PC-3 (cell line): ENCODE measurements at regions of chr5 and their contacts with region 1.

Region 1: DNA sequence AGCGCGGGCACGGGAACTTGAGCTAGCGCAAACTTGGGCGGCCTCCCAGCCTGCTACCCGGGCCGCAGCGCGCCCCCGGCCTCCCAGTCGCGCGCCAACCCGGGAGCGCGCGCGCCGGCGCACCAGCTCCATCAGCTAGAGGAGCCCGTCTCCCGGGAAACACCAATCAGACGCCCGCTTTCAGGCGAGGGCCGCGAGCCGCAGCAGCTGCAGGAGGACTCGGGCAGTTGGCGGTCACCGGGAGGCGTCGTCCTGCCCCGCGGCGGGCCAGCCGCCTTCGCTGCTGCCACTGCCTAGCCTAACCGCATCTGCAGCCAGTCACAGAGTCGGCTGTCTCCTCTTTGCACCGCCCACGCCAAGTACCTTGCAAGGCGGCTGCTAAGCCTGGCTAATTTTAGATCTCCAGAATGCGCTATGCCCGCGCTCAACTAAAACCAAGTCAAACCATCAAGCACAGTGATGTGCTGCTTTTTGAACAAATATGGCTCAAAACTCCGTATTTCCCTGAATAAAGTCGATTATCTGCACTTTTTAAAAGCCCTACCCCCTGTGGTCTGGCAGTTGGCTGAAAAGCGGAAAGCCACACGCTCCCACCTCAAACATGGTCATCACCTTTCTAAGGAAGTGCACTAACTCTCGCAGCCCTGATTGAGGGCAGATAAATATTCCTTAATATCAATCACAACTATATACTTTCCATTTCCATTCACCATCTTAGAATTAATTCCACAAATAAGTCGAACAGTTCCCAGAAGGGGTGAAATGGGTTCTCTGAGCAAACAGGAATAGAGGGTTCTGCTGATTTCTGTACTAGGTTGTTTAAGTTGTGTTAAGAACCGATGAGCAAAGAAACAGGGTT is 221.8 kb downstream of the MEF2C start:
- DNase-seq: peak; percentile 96
- ATAC-seq: peak; percentile 94
- H3K4me3 ChIP-seq: peak overlapping the region; percentile 73
- H3K27ac ChIP-seq: peak overlapping the region; percentile 71
- H3K4me1 ChIP-seq: peaks cover 8% of the 10 kb centered on the region; the same call in 1 of the 2 replicates
- H3K27me3 ChIP-seq: no peaks in the 10 kb centered on the region
- CTCF ChIP-seq: no peak

Region 2: DNA sequence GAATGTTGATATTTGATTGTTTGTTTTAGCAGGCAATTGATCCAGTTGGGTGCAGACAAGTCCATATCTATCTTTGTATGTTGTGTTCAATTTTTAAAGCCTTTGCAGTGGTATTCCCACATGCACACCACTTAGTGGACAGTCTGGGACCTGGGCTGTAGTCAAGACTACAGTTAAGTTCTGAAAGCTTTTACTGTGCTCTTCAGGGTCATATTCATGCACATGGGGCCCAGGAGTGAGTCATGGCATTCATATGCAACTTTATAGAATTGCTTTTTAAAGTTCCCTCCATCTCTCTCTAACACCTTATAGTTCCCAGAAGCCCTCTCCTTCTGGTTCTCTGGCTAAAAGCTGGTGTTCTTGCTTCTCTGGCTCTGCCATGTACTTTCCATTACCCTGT is 1020.3 kb before region 1 on chr5:
- CTCF ChIA-PET with region 1: no interaction called
- POLR2A ChIA-PET with region 1: interaction called, 15 read pairs
- intact Hi-C with region 1: no loop called
- DNase-seq: no peak
- ATAC-seq: peak; percentile 43; the same call in 1 of the 2 replicates
- H3K4me3 ChIP-seq: no peak overlapping the region
- H3K27ac ChIP-seq: no peak overlapping the region
- H3K4me1 ChIP-seq: no peaks in the 10 kb centered on the region
- H3K27me3 ChIP-seq: peaks cover 7% of the 10 kb centered on the region; the same call in 1 of the 2 replicates
- CTCF ChIP-seq: no peak

Region 3: DNA sequence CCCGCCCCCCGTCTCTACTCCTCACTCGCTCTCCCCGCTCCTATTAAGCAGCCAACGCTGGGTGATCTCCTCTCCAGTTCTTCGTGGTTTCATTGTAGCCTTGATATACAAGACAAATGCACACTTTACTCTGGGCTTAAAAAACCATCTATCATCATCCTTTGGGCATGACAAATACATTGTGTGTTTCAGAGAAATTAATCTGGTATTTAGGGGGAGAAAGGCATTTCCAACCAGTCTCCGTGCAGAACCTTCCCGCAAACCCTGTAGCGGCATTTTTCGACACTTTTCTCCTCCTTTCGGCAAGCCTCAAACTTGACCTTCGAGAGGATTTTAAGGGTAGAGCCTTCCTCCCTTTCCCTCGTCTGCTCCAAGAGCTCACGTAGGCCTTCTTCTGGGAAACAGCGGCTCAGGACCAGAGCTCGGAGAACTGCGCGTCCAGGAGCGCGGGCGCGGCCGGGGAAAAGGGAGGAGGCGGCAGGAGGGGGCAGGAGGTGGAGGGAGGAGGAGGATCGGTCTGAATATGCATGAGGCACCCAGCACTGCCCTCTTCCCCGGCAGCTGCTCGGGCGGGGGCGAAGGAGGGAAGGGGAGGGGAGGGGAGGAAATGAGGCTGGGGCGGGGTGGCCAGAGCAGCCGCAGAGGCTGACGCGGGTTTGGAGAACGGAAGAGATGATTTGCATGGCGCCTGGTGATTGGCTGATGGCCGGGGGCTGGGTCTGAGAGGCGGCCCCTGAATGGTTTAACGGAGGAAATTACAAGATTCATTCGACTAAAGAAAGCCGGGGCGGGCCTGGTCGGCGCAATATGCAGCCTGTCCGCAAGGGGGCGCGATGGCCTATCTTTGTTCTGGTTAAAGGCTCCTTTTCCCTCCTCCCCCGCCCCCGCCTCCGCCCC is 520.1 kb before region 1 on chr5:
- CTCF ChIA-PET with region 1: interaction called, 9 read pairs
- POLR2A ChIA-PET with region 1: no interaction called
- intact Hi-C with region 1: loop called (anchors 1 kb)
- DNase-seq: peak; percentile 97
- ATAC-seq: peak; percentile 92
- H3K4me3 ChIP-seq: peak overlapping the region; percentile 82
- H3K27ac ChIP-seq: no peak overlapping the region
- H3K4me1 ChIP-seq: peaks cover 13% of the 10 kb centered on the region; the same call in 1 of the 2 replicates
- H3K27me3 ChIP-seq: no peaks in the 10 kb centered on the region
- CTCF ChIP-seq: peak; percentile 49

Region 4: GRCh38 chr5:88287846-88288530 is 373.2 kb before region 1 on chr5:
- CTCF ChIA-PET with region 1: no interaction called
- POLR2A ChIA-PET with region 1: interaction called, 11 read pairs
- intact Hi-C with region 1: loop called (anchors 5 kb)
- DNase-seq: peak; percentile 64
- ATAC-seq: peak; percentile 82
- H3K4me3 ChIP-seq: no peak overlapping the region; the same call in 1 of the 2 replicates
- H3K27ac ChIP-seq: peak overlapping the region; percentile 77
- H3K4me1 ChIP-seq: peaks cover 33% of the 10 kb centered on the region
- H3K27me3 ChIP-seq: no peaks in the 10 kb centered on the region
- CTCF ChIP-seq: no peak

Region 5: GRCh38 chr5:88459971-88460370 is 201.2 kb before region 1 on chr5:
- CTCF ChIA-PET with region 1: no interaction called
- POLR2A ChIA-PET with region 1: no interaction called
- intact Hi-C with region 1: loop called (anchors 2 kb)
- DNase-seq: peak; percentile 41
- ATAC-seq: peak; percentile 32
- H3K4me3 ChIP-seq: no peak overlapping the region
- H3K27ac ChIP-seq: peak overlapping the region; percentile 42
- H3K4me1 ChIP-seq: peaks cover 21% of the 10 kb centered on the region
- H3K27me3 ChIP-seq: no peaks in the 10 kb centered on the region
- CTCF ChIP-seq: no peak

Region 6: DNA sequence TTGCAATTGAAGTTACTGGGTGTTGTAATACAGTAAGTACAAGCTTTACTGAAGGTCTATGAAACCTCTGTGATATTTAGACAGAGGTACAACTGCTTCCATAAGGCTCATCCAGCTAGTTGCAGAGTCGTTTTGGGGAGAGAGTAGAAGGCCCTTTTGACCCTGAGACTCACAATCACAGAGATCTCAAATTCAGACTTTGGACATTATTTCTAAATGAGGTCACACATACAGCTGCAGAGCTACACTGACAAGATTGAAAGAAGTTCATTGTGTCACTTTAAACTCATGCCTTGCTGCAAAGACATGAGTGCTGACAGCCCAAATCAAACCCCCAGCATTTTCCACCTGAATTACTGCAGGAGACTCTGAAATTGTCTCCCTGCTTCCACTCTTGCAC is 186.6 kb before region 1 on chr5:
- CTCF ChIA-PET with region 1: no interaction called
- POLR2A ChIA-PET with region 1: no interaction called
- intact Hi-C with region 1: no loop called
- DNase-seq: no peak
- ATAC-seq: no peak
- H3K4me3 ChIP-seq: no peak overlapping the region
- H3K27ac ChIP-seq: no peak overlapping the region
- H3K4me1 ChIP-seq: no peaks in the 10 kb centered on the region
- H3K27me3 ChIP-seq: no peaks in the 10 kb centered on the region
- CTCF ChIP-seq: no peak

Region 7: GRCh38 chr5:88606626-88607025 is 54.5 kb before region 1 on chr5:
- CTCF ChIA-PET with region 1: interaction called, 4 read pairs
- POLR2A ChIA-PET with region 1: interaction called, 10 read pairs
- intact Hi-C with region 1: loop called (anchors 1 kb)
- DNase-seq: peak; percentile 74
- ATAC-seq: peak; percentile 64
- H3K4me3 ChIP-seq: no peak overlapping the region
- H3K27ac ChIP-seq: peak overlapping the region; percentile 73
- H3K4me1 ChIP-seq: peaks cover 44% of the 10 kb centered on the region
- H3K27me3 ChIP-seq: no peaks in the 10 kb centered on the region
- CTCF ChIP-seq: no peak

Region 8: DNA sequence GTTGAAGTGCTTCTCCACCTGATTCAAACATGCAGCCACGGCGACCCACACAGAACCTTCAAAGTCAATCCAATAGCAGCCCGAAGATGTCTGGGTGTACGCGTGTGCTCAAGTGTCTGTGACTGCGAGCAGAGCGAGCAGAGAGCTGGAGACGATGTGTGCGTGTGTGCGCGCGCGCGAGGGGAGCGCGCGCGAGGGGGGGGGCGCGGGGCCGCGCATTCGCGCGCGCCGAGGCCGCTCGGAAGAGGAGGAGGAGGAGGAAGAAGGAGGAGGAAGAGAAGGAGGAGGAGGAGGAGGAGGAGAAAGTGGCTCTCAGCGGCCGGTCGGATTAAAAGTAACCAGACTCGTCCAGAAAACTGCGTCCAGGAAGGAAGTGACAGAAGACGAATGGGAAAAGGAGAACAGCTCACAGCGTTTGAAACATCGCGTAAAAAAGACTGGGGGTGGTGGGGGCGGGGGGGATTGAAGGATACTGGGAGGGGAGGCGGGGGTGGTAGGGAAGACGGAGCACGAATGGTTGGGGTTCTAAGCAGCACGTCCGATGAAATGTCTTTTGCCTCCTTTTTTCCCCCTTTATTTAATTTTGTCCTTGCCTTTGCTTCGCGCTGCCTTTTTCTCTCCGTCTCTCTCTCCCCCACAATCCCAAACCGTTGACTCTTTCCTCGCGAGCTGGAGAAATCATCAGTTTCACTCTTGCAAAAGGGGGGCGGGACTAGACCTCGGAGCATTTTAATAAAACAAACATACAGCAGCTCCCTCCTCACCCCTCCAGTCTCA is 222.1 kb after region 1 on chr5 and contains the start of gene MEF2C:
- CTCF ChIA-PET with region 1: no interaction called
- POLR2A ChIA-PET with region 1: interaction called, 13 read pairs
- intact Hi-C with region 1: no loop called
- DNase-seq: peak; percentile 83
- ATAC-seq: peak; percentile 64
- H3K4me3 ChIP-seq: peak within 1 kb of the TSS; percentile 85
- H3K27ac ChIP-seq: peak within 1 kb of the TSS; percentile 56
- H3K4me1 ChIP-seq: peaks cover 38% of the 10 kb centered on the region
- H3K27me3 ChIP-seq: no peaks in the 10 kb centered on the region
- CTCF ChIP-seq: no peak
- total RNA-seq, gene MEF2C: 4.4 and 8.0 TPM in 2 replicates